HEK293T (cell line): ENCODE measurements at regions of chr12 and their contacts with region 1.

Region 1: DNA sequence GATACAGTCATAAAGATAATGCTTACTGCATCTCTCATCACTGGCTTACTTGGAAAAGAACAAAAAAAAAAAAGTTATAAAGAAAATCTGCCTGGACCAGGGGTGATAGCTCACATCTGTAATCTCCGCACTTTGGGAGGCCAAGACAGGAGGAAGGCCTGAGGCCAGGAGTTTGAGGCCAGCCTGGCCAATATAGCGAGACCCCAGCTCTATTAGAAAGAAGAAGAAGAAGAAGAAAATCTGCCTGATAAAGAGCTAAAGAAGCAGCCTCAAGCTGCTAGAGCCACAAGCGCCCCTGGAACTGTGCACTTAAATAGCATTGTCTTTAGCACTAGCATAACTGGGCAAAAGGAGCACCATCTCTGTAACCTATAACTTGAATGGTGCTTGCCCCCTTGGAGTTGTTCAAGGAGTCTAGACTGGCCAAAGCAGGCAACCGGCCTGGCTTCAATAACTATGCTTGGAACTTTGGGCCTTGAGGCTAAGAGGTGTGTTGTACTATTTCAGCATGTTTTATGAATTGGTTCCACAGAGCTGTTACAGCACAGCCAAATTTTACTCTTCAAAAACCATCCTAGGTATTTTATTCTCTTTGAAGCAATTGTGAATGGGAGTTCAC is 53.2 kb downstream of the SINHCAF start:
- DNase-seq: no peak

Region 2: DNA sequence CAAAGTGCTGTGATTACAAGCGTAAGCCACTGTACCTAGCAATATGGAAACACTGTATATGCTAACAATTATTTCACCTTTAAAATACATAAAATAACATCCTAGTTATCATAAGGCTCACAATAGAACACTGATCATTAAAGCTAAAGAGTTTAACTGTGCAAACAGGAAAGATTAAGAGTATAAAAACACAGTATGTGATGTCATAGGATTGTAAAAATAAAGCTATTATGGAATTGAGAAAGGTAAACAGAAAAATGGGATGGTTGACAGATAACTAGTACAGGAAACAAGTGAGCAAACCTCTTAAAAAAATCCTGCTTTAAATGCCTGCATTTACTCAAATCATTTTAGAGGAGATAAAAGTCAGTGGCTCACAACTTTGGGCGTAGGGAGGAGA is 566.2 kb before region 1 on chr12:
- CTCF ChIA-PET with region 1: no interaction called
- POLR2A ChIA-PET with region 1: no interaction called
- DNase-seq: no peak

Region 3: GRCh38 chr12:31250179-31250578 is 22.5 kb before region 1 on chr12:
- CTCF ChIA-PET with region 1: interaction called, 12 read pairs
- POLR2A ChIA-PET with region 1: no interaction called
- DNase-seq: no peak

Region 4: GRCh38 chr12:31321186-31321896 is 48.6 kb after region 1 on chr12:
- CTCF ChIA-PET with region 1: no interaction called
- POLR2A ChIA-PET with region 1: no interaction called
- DNase-seq: no peak